Caco-2 (cell line): ENCODE measurements at regions of chr12 and their contacts with region 1.

Region 1: DNA sequence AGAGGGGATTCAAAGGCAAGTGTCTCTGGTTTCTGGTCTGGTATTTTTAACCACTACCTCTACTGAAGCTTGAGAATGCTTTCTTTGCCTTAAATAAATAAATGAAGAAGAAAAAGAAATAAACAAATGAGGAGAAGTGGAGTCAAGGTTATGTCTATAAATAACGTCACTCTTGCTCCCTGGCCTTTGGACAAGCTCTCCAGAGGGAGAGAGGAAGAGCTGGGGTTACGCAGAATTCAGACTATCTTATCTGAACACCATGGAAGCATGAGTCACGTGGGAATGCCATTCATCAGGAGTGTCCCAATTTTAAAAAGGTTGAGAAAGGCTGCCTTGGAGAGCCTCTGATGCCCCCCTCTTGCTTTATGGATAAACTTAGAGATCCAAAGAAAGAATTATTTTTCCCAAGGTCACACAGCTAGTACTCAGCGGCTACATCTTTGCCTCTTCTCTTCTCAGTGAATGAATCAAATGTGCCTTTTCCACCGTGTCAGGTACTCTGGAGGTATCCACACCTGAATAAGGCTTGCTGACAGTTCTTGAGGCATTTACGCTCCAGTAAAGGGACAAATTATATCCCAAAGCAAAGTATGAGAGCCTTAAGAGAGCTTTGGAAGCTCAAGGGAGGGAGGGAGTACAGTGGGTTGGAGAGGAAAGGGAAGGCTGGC is 12.9 kb upstream of the MSI1 start:
- DNase-seq: no peak
- H3K4me3 ChIP-seq: no peak overlapping the region
- H3K4me3 Mint-ChIP-seq: no peak overlapping the region
- H3K27ac Mint-ChIP-seq: no peak overlapping the region
- H3K4me1 ChIP-seq: peaks cover 12% of the 10 kb centered on the region
- H3K4me1 Mint-ChIP-seq: peaks cover 12% of the 10 kb centered on the region
- H3K27me3 ChIP-seq: no peaks in the 10 kb centered on the region
- H3K27me3 Mint-ChIP-seq: no peaks in the 10 kb centered on the region
- CTCF ChIP-seq: no peak

Region 2: GRCh38 chr12:120413901-120414695 is 32.2 kb after region 1 on chr12:
- CTCF ChIA-PET with region 1: no interaction called
- POLR2A ChIA-PET with region 1: interaction called, 13 read pairs
- intact Hi-C with region 1: no loop called
- DNase-seq: no peak
- H3K4me3 ChIP-seq: no peak overlapping the region
- H3K4me3 Mint-ChIP-seq: no peak overlapping the region
- H3K27ac Mint-ChIP-seq: no peak overlapping the region
- H3K4me1 ChIP-seq: no peaks in the 10 kb centered on the region
- H3K4me1 Mint-ChIP-seq: no peaks in the 10 kb centered on the region
- H3K27me3 ChIP-seq: no peaks in the 10 kb centered on the region
- H3K27me3 Mint-ChIP-seq: no peaks in the 10 kb centered on the region
- CTCF ChIP-seq: no peak